ENCODE measurements at regions of chr7 and their contacts with region 1.

Region 1: DNA sequence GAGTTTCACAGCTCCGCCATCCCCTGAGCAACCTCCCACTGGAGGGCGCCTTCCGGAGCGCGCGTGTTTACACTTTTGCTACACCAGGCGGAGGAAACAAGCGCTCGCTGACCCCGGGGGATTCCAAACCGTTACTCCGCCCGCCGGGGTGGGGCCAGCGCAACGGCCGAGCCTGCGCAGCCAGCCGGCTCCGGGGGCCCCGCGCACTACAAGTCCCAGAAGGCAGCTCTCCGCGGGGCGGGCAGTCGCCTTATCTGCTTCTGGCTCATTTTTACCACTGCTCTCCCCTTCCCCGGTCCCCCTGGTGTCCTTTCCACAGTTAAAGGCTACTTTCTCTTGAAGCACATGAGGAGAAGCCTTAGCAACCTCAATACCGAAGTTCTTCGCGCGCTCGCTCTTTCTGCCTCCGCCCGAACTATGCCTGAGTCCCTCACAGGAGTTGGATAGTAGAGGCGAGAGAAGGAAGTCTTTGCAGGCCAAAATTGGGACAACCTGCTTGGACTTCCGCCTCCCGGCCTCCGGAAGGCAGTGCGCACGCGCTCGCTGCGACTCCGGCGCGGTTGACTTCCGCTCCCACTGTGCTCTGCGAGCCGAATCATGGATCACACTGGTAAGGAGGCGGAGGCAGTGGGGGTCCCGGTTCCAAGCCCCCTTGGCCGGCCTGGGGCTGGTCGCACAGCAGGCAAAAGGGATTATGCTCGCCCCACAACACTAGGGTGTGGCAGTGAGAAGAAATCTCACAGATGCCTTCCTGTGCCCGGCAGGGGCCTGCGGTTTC is at the start of gene CBLL1:
- DNase-seq: peak; percentile 92 to 99 (median 96)

Region 2: DNA sequence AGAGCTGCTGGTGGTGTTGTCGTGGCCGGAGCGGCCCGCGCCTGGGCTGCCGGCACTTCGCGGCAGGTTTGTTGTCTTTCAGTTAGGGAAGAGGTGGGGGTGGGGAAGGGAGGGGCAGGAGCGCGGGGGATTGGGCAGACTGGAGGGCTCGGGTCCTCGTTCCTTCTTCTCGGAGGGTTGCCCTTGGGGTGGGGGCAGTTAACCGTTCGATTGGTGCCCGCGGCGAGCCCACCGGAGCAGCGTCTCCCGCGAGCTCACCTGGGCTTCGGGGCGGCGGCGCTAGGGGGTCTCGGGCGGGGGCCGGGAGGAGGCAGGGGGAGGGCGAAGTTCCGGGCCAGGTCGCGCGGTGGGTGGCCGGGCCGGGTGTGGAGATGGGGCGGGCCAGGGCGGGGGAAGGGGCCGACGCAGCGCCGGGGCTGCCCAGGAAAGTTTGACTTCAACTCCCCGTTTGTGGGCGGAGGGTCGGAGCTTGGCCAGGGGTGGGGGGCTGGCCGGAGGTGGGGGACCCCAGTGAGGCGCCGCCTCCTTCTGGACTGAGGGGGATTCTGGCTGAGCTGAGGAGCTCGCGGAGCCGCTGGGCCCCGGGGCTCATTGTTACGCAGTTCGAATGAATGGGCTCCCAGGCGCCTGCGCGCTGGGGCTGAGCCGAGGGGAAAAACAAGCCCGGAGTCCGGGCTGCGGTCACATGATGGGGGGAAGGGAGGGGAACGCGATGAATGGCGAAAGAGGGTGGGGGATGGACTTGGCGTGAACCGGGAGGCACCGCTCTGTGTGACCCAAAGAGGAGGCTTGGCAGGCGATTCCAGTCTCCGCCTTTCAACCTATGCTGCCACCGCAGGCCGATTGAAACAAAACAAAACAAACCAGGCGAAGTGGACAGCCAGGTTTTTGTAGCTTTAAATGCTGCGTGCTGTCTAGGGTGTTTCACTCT is 574.4 kb before region 1 on chr7:
- intact Hi-C with region 1: loop called (anchors 10 kb)
- DNase-seq: peak; percentile 91 to 99 (median 96)

Region 3: GRCh38 chr7:107579885-107580715 is 163.7 kb before region 1 on chr7 and contains the start of gene BCAP29:
- intact Hi-C with region 1: loop called (anchors 5 kb)
- DNase-seq: peak; percentile 35 to 95 (median 58)

Region 4: GRCh38 chr7:107666790-107667189 is 77.0 kb before region 1 on chr7:
- intact Hi-C with region 1: no loop called
- DNase-seq: no peak

Region 5: GRCh38 chr7:107874605-107875446 is 131.1 kb after region 1 on chr7:
- intact Hi-C with region 1: loop called (anchors 5 kb)
- DNase-seq: peak in 2 of 10 donors; percentile 15 to 22

Region 6: DNA sequence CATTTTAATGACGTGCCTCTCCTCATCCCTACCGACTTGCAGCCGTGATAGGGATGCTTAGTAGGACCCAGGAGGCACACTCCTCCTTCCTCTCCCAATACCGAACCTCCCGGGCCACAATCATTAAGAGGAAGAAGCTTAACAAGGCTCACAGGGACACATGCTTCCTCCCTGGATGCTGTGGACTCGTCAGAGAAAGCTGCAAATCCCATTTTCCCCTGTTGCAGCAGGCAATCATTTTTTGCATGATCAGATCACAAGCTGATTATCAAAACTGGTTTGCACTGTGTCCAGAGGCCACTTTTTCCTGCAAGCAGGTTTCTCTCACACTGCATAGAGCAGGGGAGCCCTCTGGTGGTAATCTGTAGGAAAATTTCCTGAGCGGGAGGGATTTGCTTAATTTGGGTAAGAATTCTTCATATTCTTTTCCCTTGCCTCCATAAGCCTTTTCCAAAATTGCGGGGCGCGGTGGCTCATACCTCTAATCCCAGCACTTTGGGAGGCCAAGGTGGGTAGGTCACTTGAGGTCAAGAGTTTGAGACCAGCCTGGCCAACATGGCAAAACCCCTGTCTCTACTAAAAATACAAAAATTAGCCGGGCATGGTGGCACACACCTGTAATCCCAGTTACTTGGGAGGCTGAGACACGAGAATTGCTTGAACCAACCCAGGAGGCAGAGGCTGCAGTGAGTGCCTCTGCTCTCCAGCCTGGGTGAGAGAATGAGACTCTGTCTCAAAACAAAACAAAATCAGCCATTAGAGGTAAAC is 402.5 kb after region 1 on chr7:
- intact Hi-C with region 1: loop called (anchors 10 kb)
- DNase-seq: peak in 8 of 10 donors; percentile 48 to 88 (median 63)

Measured in posterior cingulate gyrus (tissue), 11 donors.